HEK293 (cell line): ENCODE measurements at regions of chr2 and their contacts with region 1.

Region 1: GRCh38 chr2:39368846-39369245 is 68.2 kb downstream of the MAP4K3 start:
- H3K4me3 ChIP-seq: no peak overlapping the region
- H3K27ac ChIP-seq: no peak overlapping the region
- H3K4me1 ChIP-seq: peaks cover 5% of the 10 kb centered on the region; the same call in 1 of the 2 replicates
- CTCF ChIP-seq: no peak

Region 2: GRCh38 chr2:39356922-39357639 is 11.8 kb before region 1 on chr2:
- CTCF ChIA-PET with region 1: no interaction called
- POLR2A ChIA-PET with region 1: no interaction called
- H3K4me3 ChIP-seq: no peak overlapping the region
- H3K27ac ChIP-seq: no peak overlapping the region
- H3K4me1 ChIP-seq: no peaks in the 10 kb centered on the region
- CTCF ChIP-seq: no peak

Region 3: GRCh38 chr2:39379643-39380524 is 11.0 kb after region 1 on chr2:
- CTCF ChIA-PET with region 1: interaction called, 7 read pairs
- POLR2A ChIA-PET with region 1: interaction called, 10 read pairs
- H3K4me3 ChIP-seq: no peak overlapping the region
- H3K27ac ChIP-seq: no peak overlapping the region
- H3K4me1 ChIP-seq: peaks cover 5% of the 10 kb centered on the region; the same call in 1 of the 2 replicates
- CTCF ChIP-seq: peak; percentile 44; the same call in 1 of the 2 replicates